ENCODE measurements at regions of chr2 and their contacts with region 1.

Region 1: GRCh38 chr2:119407430-119408220 is 24.0 kb upstream of the TMEM37 start:
- DNase-seq: no peak
- H3K4me3 ChIP-seq: no peak overlapping the region
- H3K27ac ChIP-seq: no peak overlapping the region
- H3K4me1 ChIP-seq: peaks cover 13% of the 10 kb centered on the region
- H3K27me3 ChIP-seq: no peaks in the 10 kb centered on the region
- CTCF ChIP-seq: peak; percentile 82

Region 2: GRCh38 chr2:119476301-119477021 is 68.8 kb after region 1 on chr2:
- intact Hi-C with region 1: loop called (anchors 5 kb)
- DNase-seq: peak; percentile 42
- H3K4me3 ChIP-seq: no peak overlapping the region
- H3K27ac ChIP-seq: peak overlapping the region; percentile 85
- H3K4me1 ChIP-seq: peaks cover 41% of the 10 kb centered on the region
- H3K27me3 ChIP-seq: peaks cover 13% of the 10 kb centered on the region
- CTCF ChIP-seq: peak; percentile 97

Region 3: GRCh38 chr2:119659601-119660342 is 252.1 kb after region 1 on chr2:
- intact Hi-C with region 1: loop called (anchors 5 kb)
- DNase-seq: no peak
- H3K4me3 ChIP-seq: no peak overlapping the region
- H3K27ac ChIP-seq: no peak overlapping the region
- H3K4me1 ChIP-seq: peaks cover 3% of the 10 kb centered on the region
- H3K27me3 ChIP-seq: no peaks in the 10 kb centered on the region
- CTCF ChIP-seq: peak; percentile 90

Region 4: GRCh38 chr2:119713804-119714490 is 306.3 kb after region 1 on chr2:
- intact Hi-C with region 1: no loop called
- DNase-seq: no peak
- H3K4me3 ChIP-seq: no peak overlapping the region
- H3K27ac ChIP-seq: no peak overlapping the region
- H3K4me1 ChIP-seq: peaks cover 10% of the 10 kb centered on the region
- H3K27me3 ChIP-seq: no peaks in the 10 kb centered on the region
- CTCF ChIP-seq: no peak

Measured in left ventricle myocardium inferior (tissue), 1 donor.